ENCODE measurements at regions of chr1 and their contacts with region 1.

Region 1: DNA sequence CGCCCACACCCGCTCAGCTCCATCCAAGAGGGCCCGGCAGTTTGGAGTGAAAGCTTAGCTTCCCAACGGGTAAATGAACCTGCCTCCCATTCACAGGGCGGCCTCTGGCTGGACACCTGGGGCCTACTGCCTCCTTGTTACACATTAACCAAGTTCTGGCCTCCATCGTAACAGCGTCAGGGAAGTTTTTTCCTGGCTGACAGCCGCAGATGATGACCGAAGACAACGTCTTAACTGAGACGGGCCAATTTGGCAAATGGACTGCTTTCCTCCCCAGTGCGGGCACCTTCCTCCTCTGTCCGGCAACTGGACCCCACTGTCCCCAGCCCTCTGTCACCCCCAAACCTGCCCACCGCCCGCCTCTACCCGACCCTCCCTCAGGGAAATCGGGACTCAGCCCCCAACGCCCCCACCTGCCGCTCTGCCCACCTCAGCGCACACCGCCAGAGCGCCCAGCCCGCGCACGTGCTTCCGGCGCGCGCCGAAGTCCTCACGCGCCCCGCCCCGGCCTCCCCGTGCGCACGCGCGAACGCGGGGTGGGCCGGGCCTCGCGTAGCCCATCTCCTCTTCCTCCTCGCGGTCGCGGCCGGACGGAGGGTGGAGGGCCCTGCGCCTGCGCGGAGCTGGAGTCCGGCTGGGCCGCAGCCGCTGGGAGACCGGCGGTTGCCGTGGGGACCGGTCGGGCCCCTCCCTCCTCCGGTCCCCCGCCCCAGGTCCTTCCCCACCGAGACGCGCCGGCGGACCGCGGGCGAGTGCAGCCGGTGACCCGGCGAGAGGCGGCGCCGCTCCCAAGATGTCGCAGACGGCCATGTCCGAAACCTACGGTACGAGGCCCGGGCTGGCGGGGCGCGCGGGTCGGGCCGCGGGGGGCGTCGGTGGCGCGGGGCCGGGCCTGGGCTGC is at the start of gene RAB4A:
- DNase-seq: peak; percentile 60 to 89
- H3K4me3 ChIP-seq: peak within 1 kb of the TSS; percentile 71
- H3K27ac ChIP-seq: no peak within 1 kb of the TSS
- H3K4me1 ChIP-seq: peaks cover 25% of the 10 kb centered on the region
- H3K27me3 ChIP-seq: no peaks in the 10 kb centered on the region
- CTCF ChIP-seq: no peak
- total RNA-seq, gene RAB4A: 29.0 and 33.7 TPM in 2 replicates

Region 2: GRCh38 chr1:228837817-228838716 is 432.7 kb before region 1 on chr1:
- CTCF ChIA-PET with region 1: no interaction called
- POLR2A ChIA-PET with region 1: no interaction called
- intact Hi-C with region 1: no loop called
- DNase-seq: peak; percentile 59 to 86
- H3K4me3 ChIP-seq: no peak overlapping the region
- H3K27ac ChIP-seq: no peak overlapping the region
- H3K4me1 ChIP-seq: peaks cover 12% of the 10 kb centered on the region
- H3K27me3 ChIP-seq: peaks cover 25% of the 10 kb centered on the region
- CTCF ChIP-seq: no peak

Region 3: DNA sequence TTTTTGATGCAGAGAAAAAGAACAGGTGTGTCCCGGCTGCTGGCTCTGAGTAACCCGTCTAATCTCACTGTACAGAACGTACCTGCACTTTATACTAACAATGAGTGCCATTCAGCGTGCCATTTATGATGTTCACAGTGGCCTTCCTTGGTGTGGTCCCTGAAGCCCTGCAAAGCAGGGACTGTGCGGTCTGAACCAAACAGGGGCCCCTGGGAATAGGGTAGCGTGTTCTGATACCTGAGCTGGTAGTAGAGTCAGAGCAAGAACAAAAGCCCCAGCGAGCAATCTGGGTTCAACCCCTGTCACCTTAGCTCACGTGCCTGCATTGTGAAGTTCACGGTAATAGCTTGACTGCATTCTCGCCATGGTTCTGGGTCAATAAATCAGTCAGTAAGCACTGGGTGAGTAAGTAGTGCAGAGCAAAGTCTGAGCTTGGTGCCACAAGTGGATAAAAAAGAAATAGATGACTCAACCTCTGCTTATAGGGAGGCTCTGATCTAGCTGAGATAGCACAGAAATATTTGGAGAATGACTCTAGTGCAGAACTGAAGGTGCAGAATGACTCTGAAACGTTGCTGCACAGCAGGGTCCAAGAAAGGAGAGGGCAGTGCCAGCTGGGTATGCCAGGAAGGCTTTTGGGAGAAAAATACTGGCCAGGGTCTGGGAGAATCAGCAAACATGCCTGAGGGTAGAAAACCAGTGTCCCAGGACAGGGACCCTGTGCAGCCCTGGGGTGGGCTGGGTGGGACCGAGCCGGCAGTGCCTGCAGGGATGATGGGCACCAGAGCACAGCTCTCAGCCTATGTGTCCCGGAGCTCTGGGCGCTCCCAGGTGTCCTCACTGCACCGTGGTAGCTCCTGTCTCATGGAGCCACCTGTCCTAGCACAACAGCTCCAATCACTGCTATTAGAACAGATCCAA is 409.6 kb before region 1 on chr1:
- CTCF ChIA-PET with region 1: no interaction called
- POLR2A ChIA-PET with region 1: no interaction called
- intact Hi-C with region 1: no loop called
- DNase-seq: peak in 1 of 2 experiments; percentile 72
- H3K4me3 ChIP-seq: no peak overlapping the region
- H3K27ac ChIP-seq: no peak overlapping the region
- H3K4me1 ChIP-seq: no peaks in the 10 kb centered on the region
- H3K27me3 ChIP-seq: peaks cover 60% of the 10 kb centered on the region
- CTCF ChIP-seq: no peak

Region 4: GRCh38 chr1:229287267-229287666 is 16.5 kb after region 1 on chr1:
- CTCF ChIA-PET with region 1: no interaction called
- POLR2A ChIA-PET with region 1: no interaction called
- intact Hi-C with region 1: no loop called
- DNase-seq: no peak
- H3K4me3 ChIP-seq: no peak overlapping the region
- H3K27ac ChIP-seq: no peak overlapping the region
- H3K4me1 ChIP-seq: no peaks in the 10 kb centered on the region
- H3K27me3 ChIP-seq: no peaks in the 10 kb centered on the region
- CTCF ChIP-seq: no peak

Region 5: DNA sequence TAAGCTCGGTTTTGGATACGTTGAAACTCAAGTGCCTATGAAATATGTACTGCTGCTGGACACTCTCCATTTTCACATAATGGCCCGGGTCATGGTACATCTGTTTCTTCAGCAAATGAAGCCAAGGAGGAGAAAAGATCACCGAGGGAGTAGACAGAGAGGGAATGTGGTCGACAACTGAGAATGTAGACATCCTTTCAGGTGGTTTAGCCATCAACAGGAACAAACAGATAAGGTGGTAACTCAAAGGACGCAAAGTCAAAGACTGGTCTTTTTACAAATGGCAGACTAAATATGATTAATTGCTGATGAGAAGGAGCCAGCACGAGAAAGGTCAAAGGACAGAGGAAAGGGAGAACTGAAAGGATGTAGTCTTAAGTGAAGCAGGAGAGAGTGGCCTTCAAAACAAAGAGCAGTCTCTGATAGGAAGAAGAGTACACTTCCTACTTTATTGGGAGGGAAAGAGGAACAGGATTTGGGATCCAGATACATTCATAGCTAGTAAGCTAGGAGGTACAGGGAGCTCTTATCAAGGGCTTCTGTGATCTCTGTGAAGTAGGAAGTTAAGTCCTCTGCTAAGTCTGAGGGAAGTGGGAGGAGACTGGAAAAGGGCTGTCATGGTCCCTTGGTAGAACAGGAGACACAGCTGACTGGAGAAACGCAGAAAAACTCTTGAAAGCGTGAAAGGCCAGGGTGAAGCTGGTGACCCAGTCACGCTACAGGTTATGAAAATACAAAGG is 209.0 kb after region 1 on chr1:
- CTCF ChIA-PET with region 1: interaction called, 11 read pairs
- POLR2A ChIA-PET with region 1: no interaction called
- intact Hi-C with region 1: no loop called
- DNase-seq: no peak
- H3K4me3 ChIP-seq: no peak overlapping the region
- H3K27ac ChIP-seq: no peak overlapping the region
- H3K4me1 ChIP-seq: no peaks in the 10 kb centered on the region
- H3K27me3 ChIP-seq: no peaks in the 10 kb centered on the region
- CTCF ChIP-seq: no peak

Region 6: GRCh38 chr1:230176871-230177411 is 906.1 kb after region 1 on chr1:
- CTCF ChIA-PET with region 1: no interaction called
- POLR2A ChIA-PET with region 1: no interaction called
- intact Hi-C with region 1: no loop called
- DNase-seq: no peak
- H3K4me3 ChIP-seq: no peak overlapping the region
- H3K27ac ChIP-seq: no peak overlapping the region
- H3K4me1 ChIP-seq: no peaks in the 10 kb centered on the region
- H3K27me3 ChIP-seq: no peaks in the 10 kb centered on the region
- CTCF ChIP-seq: no peak